HepG2 (cell line): ENCODE measurements at regions of chr7 and their contacts with region 1.

Region 1: GRCh38 chr7:131945313-131945911 is 389.0 kb upstream of the PODXL start:
- DNase-seq: peak; percentile 9
- ATAC-seq: peak; percentile 92
- H3K4me3 ChIP-seq: 0 out of 6 replicates have a peak overlapping the region, but pooled peaks of 1 of the 3 experiments have one; percentile 10
- H3K27ac ChIP-seq: no peak overlapping the region
- H3K4me1 ChIP-seq: peaks cover 31% of the 10 kb centered on the region
- H3K27me3 ChIP-seq: peaks cover 4 to 41% of the 10 kb centered on the region in 2 experiments; a peak in 4 of 5 replicates
- CTCF ChIP-seq: peak; percentile 91
- EP300 ChIP-seq: no peak
- POLR2A ChIP-seq: no peak
- RAD21 ChIP-seq: peak; percentile 93

Region 2: DNA sequence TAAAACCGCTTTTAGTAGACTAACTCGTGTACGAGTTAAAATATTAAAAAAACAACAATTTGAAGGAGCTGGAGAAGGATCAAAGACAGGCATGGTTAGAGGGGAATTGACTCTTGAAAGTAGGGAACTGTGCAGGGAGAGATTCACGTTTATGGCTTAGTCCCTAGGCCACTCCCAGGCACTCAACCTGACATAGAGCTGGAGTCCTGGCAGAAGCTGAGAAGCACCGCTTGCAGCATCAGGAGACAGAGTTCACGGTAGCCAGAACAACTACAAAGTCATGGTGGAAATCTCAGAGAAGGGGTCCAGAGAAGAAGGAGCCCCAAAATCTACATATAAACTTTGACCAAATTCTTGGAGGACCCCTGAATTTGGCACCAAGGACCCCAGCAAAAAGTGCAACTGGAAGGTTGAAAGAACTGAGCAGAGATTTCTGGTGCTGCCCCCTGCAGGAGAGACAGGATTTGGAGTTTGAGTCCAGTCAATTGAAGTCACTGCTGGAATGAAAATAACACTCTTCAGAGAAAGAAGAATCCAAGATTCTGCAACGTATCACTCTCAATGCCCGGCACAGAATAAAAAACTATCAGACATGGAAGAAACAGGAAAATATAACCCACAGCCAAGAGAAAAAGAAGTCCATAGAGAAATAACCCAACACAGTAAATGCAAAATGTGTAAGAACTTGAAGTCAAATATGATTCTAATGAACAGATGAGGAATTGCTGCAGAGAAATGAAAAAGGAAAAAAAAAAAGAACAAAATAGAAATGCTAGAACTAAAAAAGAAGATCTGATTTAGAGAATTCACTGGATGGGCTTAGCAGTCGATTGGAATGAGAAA is 104.3 kb after region 1 on chr7:
- CTCF ChIA-PET with region 1: interaction called, 9 read pairs
- POLR2A ChIA-PET with region 1: no interaction called
- in situ Hi-C with region 1: no loop called
- intact Hi-C with region 1: loop called (anchors 1 kb)
- DNase-seq: peak; percentile 18
- ATAC-seq: peak; percentile 48; the same call in 1 of the 3 replicates
- H3K4me3 ChIP-seq: no peak overlapping the region
- H3K27ac ChIP-seq: no peak overlapping the region
- H3K4me1 ChIP-seq: no peaks in the 10 kb centered on the region
- H3K27me3 ChIP-seq: no peaks in the 10 kb centered on the region
- CTCF ChIP-seq: peak; percentile 56; the same call in 1 of the 2 replicates
- EP300 ChIP-seq: no peak
- POLR2A ChIP-seq: no peak
- RAD21 ChIP-seq: no peak

Region 3: DNA sequence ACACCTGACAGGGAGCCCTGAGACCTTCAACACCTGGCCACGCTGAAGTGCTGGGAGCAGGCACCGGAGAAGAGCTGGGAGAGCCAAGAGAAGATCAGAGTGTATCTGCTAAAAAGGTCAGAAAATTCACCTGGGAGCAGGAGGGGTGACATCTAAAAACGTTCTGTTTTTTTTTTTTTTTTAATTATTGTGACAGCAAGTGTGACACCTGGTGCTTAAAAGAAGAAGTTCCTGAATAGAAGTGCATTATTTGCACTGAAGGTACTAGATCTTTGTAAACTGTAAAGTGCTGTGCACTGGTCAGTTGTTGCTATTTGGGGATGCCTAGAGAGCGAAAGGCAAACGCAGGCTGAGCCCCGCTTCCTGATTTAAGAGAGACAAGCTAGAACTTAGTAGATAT is 208.8 kb after region 1 on chr7:
- CTCF ChIA-PET with region 1: no interaction called
- POLR2A ChIA-PET with region 1: no interaction called
- in situ Hi-C with region 1: loop called (anchors 10 kb)
- intact Hi-C with region 1: no loop called
- DNase-seq: no peak
- ATAC-seq: no peak
- H3K4me3 ChIP-seq: no peak overlapping the region
- H3K27ac ChIP-seq: no peak overlapping the region
- H3K4me1 ChIP-seq: no peaks in the 10 kb centered on the region
- H3K27me3 ChIP-seq: peaks cover 3 to 53% of the 10 kb centered on the region in 2 experiments
- CTCF ChIP-seq: no peak
- EP300 ChIP-seq: no peak
- POLR2A ChIP-seq: no peak
- RAD21 ChIP-seq: no peak